GM18951 (cell line): ENCODE measurements at regions of chr7 and their contacts with region 1.

Region 1: DNA sequence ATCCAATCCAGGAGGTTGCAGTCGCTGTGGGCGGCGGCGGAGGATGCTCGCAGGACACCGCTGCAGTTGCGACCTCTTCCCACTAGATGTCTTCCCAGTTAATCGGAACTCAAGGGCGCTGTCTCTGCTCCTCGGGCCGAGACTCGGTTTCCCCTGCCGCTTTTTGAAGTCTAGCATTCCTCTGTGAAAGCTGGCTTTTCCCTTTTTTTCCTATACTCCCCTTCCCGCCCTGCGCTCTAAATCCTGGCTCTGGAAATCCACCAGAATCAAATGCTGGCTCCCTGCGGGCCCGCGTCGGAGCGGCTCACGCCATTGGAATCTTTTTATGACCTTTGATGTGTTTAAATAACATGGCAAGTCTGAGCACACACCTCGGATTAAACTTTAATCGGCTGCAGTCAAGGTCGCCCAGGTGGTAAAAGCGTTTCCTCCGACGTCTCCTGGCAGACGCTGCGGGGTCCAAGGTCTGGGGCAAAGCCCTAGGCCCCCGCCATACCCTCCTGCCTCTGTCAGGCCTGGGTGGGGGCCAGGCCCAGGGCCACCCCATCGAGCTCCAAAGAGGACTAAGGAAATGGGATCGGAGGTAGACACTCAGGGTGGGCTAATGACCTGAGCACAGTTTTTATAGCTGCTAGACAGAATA is 10.7 kb upstream of the HOXA13 start:
- POLR2A ChIP-seq: no peak

Region 2: GRCh38 chr7:26549281-26549943 is 661.1 kb before region 1 on chr7:
- in situ Hi-C with region 1: no loop called
- POLR2A ChIP-seq: no peak

Region 3: GRCh38 chr7:27560540-27561235 is 350.1 kb after region 1 on chr7:
- in situ Hi-C with region 1: loop called (anchors 25 kb)
- POLR2A ChIP-seq: no peak